Left cardiac atrium (tissue), 4 donors: ENCODE measurements at regions of chr17 and their contacts with region 1.

Region 1: GRCh38 chr17:409848-410545 is 57.4 kb upstream of the RPH3AL start:
- DNase-seq: peak; percentile 100
- ATAC-seq: peak; percentile 93 to 94

Region 2: GRCh38 chr17:661509-661908 is 251.5 kb after region 1 on chr17:
- intact Hi-C with region 1: no loop called
- DNase-seq: no peak
- ATAC-seq: no peak

Region 3: GRCh38 chr17:700504-701094 is 290.6 kb after region 1 on chr17:
- intact Hi-C with region 1: loop called (anchors 2 to 5 kb)
- DNase-seq: no peak
- ATAC-seq: peak; percentile 50 to 53